ENCODE measurements at regions of chr17 and their contacts with region 1.

Region 1: GRCh38 chr17:409848-410545 is 57.4 kb upstream of the RPH3AL start:
- DNase-seq: peak; percentile 99 to 100 (median 100)
- ATAC-seq: peak; percentile 29
- H3K4me3 ChIP-seq: peak overlapping the region; percentile 72 to 80
- H3K4me3 Mint-ChIP-seq: peak overlapping the region; percentile 95
- H3K27ac ChIP-seq: peak overlapping the region; percentile 89 to 90
- H3K27ac Mint-ChIP-seq: peak overlapping the region; percentile 99
- H3K4me1 ChIP-seq: peaks cover 45% of the 10 kb centered on the region
- H3K4me1 Mint-ChIP-seq: peaks cover 51% of the 10 kb centered on the region
- H3K27me3 ChIP-seq: no peaks in the 10 kb centered on the region
- H3K27me3 Mint-ChIP-seq: no peaks in the 10 kb centered on the region
- CTCF ChIP-seq: no peak

Region 2: GRCh38 chr17:233473-233941 is 176.5 kb before region 1 on chr17:
- CTCF ChIA-PET with region 1: no interaction called
- POLR2A ChIA-PET with region 1: no interaction called
- intact Hi-C with region 1: no loop called
- DNase-seq: no peak
- ATAC-seq: no peak
- H3K4me3 ChIP-seq: no peak overlapping the region
- H3K4me3 Mint-ChIP-seq: no peak overlapping the region
- H3K27ac ChIP-seq: no peak overlapping the region
- H3K27ac Mint-ChIP-seq: no peak overlapping the region
- H3K4me1 ChIP-seq: no peaks in the 10 kb centered on the region
- H3K4me1 Mint-ChIP-seq: no peaks in the 10 kb centered on the region
- H3K27me3 ChIP-seq: no peaks in the 10 kb centered on the region
- H3K27me3 Mint-ChIP-seq: peaks cover 5% of the 10 kb centered on the region
- CTCF ChIP-seq: no peak

Region 3: GRCh38 chr17:444879-445454 is 35.0 kb after region 1 on chr17:
- CTCF ChIA-PET with region 1: interaction called, 27 read pairs
- POLR2A ChIA-PET with region 1: no interaction called
- intact Hi-C with region 1: no loop called
- DNase-seq: no peak
- ATAC-seq: no peak
- H3K4me3 ChIP-seq: no peak overlapping the region
- H3K4me3 Mint-ChIP-seq: no peak overlapping the region
- H3K27ac ChIP-seq: no peak overlapping the region
- H3K27ac Mint-ChIP-seq: no peak overlapping the region
- H3K4me1 ChIP-seq: peaks cover 27% of the 10 kb centered on the region
- H3K4me1 Mint-ChIP-seq: peaks cover 21% of the 10 kb centered on the region
- H3K27me3 ChIP-seq: no peaks in the 10 kb centered on the region
- H3K27me3 Mint-ChIP-seq: no peaks in the 10 kb centered on the region
- CTCF ChIP-seq: no peak

Region 4: GRCh38 chr17:565521-565920 is 155.5 kb after region 1 on chr17:
- CTCF ChIA-PET with region 1: interaction called, 11 read pairs
- POLR2A ChIA-PET with region 1: no interaction called
- intact Hi-C with region 1: no loop called
- DNase-seq: no peak
- ATAC-seq: no peak
- H3K4me3 ChIP-seq: no peak overlapping the region
- H3K4me3 Mint-ChIP-seq: no peak overlapping the region
- H3K27ac ChIP-seq: no peak overlapping the region
- H3K27ac Mint-ChIP-seq: no peak overlapping the region
- H3K4me1 ChIP-seq: no peaks in the 10 kb centered on the region
- H3K4me1 Mint-ChIP-seq: no peaks in the 10 kb centered on the region
- H3K27me3 ChIP-seq: no peaks in the 10 kb centered on the region
- H3K27me3 Mint-ChIP-seq: no peaks in the 10 kb centered on the region
- CTCF ChIP-seq: no peak

Region 5: GRCh38 chr17:705863-706262 is 295.9 kb after region 1 on chr17:
- CTCF ChIA-PET with region 1: interaction called, 136 read pairs
- POLR2A ChIA-PET with region 1: interaction called, 13 read pairs
- intact Hi-C with region 1: no loop called
- DNase-seq: no peak
- ATAC-seq: no peak
- H3K4me3 ChIP-seq: no peak overlapping the region
- H3K4me3 Mint-ChIP-seq: no peak overlapping the region
- H3K27ac ChIP-seq: no peak overlapping the region
- H3K27ac Mint-ChIP-seq: no peak overlapping the region
- H3K4me1 ChIP-seq: no peaks in the 10 kb centered on the region
- H3K4me1 Mint-ChIP-seq: peaks cover 18% of the 10 kb centered on the region
- H3K27me3 ChIP-seq: no peaks in the 10 kb centered on the region
- H3K27me3 Mint-ChIP-seq: no peaks in the 10 kb centered on the region
- CTCF ChIP-seq: no peak

Region 6: DNA sequence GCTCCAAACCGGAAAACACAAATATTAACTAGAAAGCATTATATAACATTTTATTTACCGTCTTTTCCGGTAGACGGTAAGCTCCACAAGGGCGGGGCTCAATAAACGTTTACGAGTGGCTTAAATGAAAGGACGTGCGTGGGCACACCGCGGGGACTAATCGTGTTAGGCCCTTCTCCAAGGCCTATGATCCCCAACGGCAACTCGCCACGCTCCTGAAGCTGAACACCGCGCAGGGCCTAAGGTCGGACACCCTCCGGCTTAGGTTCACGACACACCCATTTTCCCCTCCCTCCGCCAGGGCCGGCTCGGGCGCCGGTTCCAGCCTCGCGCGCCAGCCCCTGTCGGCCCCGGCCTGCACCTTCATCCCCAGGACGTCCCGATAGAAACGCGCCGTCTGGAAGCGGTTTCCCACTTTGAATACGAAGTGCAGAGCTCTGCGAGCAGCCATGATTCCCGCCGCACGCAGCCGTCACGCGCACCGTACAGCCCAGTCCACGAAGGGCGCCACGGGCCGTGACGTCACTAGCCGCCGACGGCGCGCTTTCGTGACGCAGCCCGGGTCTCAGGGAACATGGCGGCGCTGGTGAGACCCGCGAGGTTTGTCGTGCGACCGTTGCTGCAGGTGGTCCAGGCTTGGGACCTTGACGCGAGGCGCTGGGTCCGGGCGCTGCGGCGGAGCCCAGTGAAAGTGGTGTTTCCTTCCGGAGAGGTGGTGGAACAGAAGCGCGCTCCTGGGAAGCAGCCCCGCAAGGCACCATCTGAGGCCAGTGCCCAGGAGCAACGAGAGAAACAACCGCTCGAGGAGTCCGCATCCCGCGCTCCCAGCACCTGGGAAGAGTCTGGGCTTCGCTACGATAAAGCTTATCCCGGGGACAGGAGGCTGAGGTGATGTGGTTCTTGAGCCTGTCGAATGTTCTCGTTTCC is 372.1 kb after region 1 on chr17 and contains the starts of genes GLOD4 and MRM3:
- CTCF ChIA-PET with region 1: interaction called, 5 read pairs
- POLR2A ChIA-PET with region 1: no interaction called
- intact Hi-C with region 1: loop called (anchors 1 kb)
- DNase-seq: peak; percentile 91 to 99 (median 95)
- ATAC-seq: peak; percentile 94
- H3K4me3 ChIP-seq: peak within 1 kb of the TSS; percentile 92 to 100
- H3K4me3 Mint-ChIP-seq: peak within 1 kb of the TSS; percentile 97
- H3K27ac ChIP-seq: peak within 1 kb of the TSS; percentile 94 to 97
- H3K27ac Mint-ChIP-seq: peak within 1 kb of the TSS; percentile 97
- H3K4me1 ChIP-seq: peaks cover 28% of the 10 kb centered on the region
- H3K4me1 Mint-ChIP-seq: peaks cover 34% of the 10 kb centered on the region
- H3K27me3 ChIP-seq: no peaks in the 10 kb centered on the region
- H3K27me3 Mint-ChIP-seq: no peaks in the 10 kb centered on the region
- CTCF ChIP-seq: no peak
- total RNA-seq, gene GLOD4: 80.7 to 86.2 TPM
- total RNA-seq, gene MRM3: 47.4 to 49.7 TPM

Measured in CD8-positive, alpha-beta T cell (primary cell).